Heart left ventricle (tissue), 16 donors: ENCODE measurements at regions of chr13 and their contacts with region 1.

Region 1: GRCh38 chr13:80430561-80430960 is 89.6 kb upstream of the SPRY2 start:
- DNase-seq: no peak
- ATAC-seq: no peak
- H3K4me3 ChIP-seq: no peak overlapping the region
- H3K27ac ChIP-seq: no peak overlapping the region
- H3K4me1 ChIP-seq: peaks cover 0 to 7% (median 0%) of the 10 kb centered on the region in 12 donors
- H3K27me3 ChIP-seq: no peaks in the 10 kb centered on the region
- CTCF ChIP-seq: no peak
- POLR2A ChIP-seq: no peak

Region 2: DNA sequence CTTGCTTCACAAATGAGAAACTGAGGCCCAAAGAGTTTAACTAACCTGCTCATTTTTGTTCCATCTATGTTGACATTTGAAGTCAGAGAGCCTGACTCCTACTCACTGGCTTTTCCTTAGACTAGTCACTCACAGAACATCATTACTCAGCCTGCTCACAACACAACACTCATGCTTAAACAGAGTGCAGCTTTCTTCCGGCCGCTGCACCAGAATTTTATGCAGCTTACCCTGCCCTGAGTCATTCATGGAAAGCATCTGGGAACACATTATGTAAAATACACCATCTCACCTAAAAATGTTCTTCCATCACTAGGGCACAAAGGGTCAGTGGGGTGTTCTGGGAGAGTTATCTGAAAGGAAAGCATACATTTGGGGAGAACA is 393.1 kb before region 1 on chr13:
- intact Hi-C with region 1: no loop called
- DNase-seq: no peak
- ATAC-seq: no peak
- H3K4me3 ChIP-seq: no peak overlapping the region
- H3K27ac ChIP-seq: peak overlapping the region in 1 of 12 donors; percentile 34
- H3K4me1 ChIP-seq: peaks cover 0 to 33% (median 0%) of the 10 kb centered on the region in 12 donors
- H3K27me3 ChIP-seq: no peaks in the 10 kb centered on the region
- CTCF ChIP-seq: no peak
- POLR2A ChIP-seq: no peak

Region 3: DNA sequence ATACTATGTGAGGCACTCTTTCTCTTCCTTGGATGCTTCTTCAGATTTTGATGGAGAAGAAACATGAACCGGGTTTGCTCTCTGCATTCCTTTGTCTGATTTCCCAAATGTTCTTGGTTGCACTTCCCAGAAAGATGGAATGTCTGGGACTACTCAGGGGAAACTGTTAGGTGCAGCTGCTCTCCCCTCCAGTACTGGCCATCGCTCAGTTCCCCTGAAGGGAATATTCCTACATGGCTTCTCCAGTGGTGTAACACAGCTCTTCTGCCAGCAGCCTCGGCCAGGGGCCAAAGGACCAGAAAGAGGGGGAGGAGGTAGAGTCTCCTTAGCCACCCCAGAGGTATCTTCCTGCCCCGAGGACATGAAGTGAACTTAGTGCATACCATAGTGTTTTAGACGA is 56.1 kb before region 1 on chr13:
- intact Hi-C with region 1: no loop called
- DNase-seq: peak; percentile 36 to 82 (median 67)
- ATAC-seq: peak; percentile 81 to 95 (median 92)
- H3K4me3 ChIP-seq: no peak overlapping the region
- H3K27ac ChIP-seq: peak overlapping the region in 7 of 12 donors; percentile 1 to 75 (median 50)
- H3K4me1 ChIP-seq: peaks cover 0 to 6% (median 0%) of the 10 kb centered on the region in 12 donors
- H3K27me3 ChIP-seq: no peaks in the 10 kb centered on the region
- CTCF ChIP-seq: no peak
- POLR2A ChIP-seq: no peak

Region 4: DNA sequence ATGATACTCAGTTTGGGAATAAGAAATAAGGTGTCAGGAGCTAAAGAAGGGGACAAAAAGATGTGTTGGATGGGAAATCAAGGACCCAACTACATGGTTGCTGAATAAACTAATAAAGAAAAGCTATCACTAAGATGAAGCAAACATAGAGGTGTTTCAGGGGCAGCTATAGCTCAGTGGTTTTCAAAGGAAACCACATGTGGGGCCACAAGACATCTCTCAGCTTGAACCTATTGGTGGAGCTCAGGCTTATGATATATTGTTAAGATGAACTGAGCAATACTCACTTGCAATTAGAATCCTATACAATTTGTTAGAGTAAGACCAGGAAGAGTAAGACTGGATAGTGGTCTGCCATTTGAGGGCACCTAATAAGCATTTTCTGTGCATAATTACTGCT is 44.6 kb before region 1 on chr13:
- intact Hi-C with region 1: loop called in 1 of 10 experiments (anchors 5 kb)
- DNase-seq: no peak
- ATAC-seq: no peak
- H3K4me3 ChIP-seq: no peak overlapping the region
- H3K27ac ChIP-seq: no peak overlapping the region
- H3K4me1 ChIP-seq: no peaks in the 10 kb centered on the region
- H3K27me3 ChIP-seq: no peaks in the 10 kb centered on the region
- CTCF ChIP-seq: no peak
- POLR2A ChIP-seq: no peak

Region 5: GRCh38 chr13:80469853-80470381 is 39.4 kb after region 1 on chr13:
- intact Hi-C with region 1: no loop called
- DNase-seq: peak; percentile 73 to 89 (median 76)
- ATAC-seq: peak; percentile 98 to 100 (median 98)
- H3K4me3 ChIP-seq: peak overlapping the region in 1 of 12 donors; percentile 4
- H3K27ac ChIP-seq: peak overlapping the region; percentile 79 to 96 (median 86)
- H3K4me1 ChIP-seq: peaks cover 8 to 36% (median 24%) of the 10 kb centered on the region in 12 donors
- H3K27me3 ChIP-seq: no peaks in the 10 kb centered on the region
- CTCF ChIP-seq: no peak
- POLR2A ChIP-seq: no peak

Region 6: DNA sequence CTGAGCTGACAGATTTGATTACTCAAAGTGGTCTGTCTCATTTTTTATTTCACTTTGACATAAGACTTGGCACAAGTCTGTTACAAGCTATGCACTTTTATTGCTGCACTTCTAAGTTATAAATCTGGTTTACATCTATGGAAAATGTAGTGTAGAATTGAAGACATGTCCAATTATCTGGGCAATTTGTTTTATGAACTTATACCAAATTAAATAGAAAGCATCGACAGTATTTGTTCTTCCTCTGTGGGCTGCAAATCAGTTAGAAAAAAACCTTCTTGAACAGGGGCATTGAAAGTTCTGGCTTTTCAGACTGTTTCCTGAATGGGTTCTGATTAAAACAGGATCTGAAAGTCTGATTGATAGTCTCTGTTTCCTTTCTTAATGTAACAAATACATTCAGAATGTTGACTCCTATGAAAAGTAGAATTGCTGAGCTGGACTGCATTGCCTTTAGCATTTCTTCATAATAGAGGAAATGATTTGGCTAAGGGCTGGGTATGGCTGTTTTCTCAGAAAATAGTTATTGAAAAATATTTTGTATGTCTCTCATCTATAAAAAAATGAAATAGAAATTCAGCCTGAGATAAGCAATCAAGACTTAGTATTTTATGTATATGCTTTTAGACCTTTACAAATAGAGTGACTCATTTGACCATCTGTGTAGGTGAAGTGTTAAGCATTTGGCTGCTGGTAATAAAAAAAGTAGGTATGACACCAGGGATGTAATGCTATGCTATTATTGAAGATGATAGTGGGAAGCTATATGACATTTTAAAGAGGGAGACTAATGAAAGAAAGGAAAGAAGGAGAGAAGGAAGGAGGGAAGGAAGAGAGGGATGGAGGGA is 121.3 kb after region 1 on chr13:
- intact Hi-C with region 1: no loop called
- DNase-seq: no peak
- ATAC-seq: no peak
- H3K4me3 ChIP-seq: no peak overlapping the region
- H3K27ac ChIP-seq: peak overlapping the region in 11 of 12 donors; percentile 7 to 67 (median 54)
- H3K4me1 ChIP-seq: peaks cover 0 to 42% (median 6%) of the 10 kb centered on the region in 12 donors
- H3K27me3 ChIP-seq: no peaks in the 10 kb centered on the region
- CTCF ChIP-seq: no peak
- POLR2A ChIP-seq: no peak